ENCODE measurements at regions of chr11 and their contacts with region 1.

Region 1: DNA sequence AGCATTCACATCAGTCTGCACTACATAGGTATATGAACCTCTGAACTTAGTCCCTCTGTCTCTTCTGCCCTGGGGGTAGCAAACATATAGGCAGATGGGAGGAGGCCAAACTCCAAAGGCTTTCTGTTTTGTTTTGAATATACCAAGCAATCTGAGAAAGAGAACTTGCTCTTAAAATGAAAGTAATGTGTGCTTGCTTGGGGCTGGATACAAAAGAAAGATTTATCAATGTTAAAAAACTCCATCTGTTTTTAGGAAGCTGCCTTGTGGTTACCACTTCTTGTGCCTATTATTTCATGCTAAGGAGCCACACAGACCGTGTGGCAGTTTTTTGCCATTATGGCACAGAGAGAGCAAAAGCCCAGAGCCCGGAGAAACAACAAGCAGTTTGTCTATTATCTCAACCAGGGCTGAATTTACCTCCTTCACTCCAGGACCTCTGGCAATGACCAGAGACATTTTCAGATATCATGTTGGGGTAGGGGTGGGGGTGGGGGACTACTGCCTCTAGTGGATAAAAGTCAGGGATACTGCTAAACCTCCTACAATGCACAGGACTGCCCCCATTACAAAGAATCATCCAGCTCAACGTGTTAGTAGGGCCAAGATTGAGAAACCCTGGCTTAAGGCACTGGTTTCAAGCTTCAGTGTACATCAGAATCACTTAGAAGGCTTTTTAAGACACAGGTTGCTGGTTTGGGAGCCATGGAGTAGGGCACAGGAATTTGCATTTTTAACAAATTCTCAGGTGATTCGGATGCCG is 124.2 kb downstream of the APIP start:
- DNase-seq: no peak
- ATAC-seq: peak; percentile 72
- H3K4me3 Mint-ChIP-seq: no peak overlapping the region
- H3K27ac Mint-ChIP-seq: no peak overlapping the region
- H3K4me1 Mint-ChIP-seq: peaks cover 34% of the 10 kb centered on the region
- H3K27me3 Mint-ChIP-seq: no peaks in the 10 kb centered on the region; the same call in 1 of the 2 replicates
- CTCF ChIP-seq: no peak

Region 2: DNA sequence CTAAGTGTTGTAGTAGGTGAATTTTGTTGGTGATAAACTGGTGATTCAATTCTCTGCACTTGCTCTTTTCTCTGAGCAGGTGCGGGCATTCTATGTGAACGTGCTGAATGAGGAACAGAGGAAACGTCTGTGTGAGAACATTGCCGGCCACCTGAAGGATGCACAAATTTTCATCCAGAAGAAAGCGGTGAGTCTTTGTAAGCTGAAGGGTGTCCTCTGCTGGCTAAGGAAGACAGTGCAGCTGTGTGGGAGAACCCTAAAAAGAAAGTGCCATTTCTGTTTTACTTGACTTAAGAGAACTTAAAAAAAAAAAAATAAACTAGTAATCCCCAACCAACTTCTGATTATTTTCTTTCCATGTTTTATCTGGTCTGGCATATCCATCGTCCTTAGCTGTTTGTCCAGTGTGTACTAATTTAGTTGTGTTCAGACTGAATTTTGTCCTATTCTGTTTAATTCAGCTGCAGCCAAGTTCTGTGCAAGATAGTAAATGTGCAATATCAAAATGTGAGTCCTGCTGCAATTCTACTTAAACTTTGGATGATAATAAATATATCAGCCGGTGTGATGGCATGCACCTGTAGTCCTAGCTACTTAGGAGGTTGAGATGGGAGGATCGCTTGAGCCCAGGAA is 323.6 kb before region 1 on chr11:
- CTCF ChIA-PET with region 1: no interaction called
- POLR2A ChIA-PET with region 1: no interaction called
- DNase-seq: peak; percentile 38
- ATAC-seq: peak; percentile 71
- H3K4me3 Mint-ChIP-seq: no peak overlapping the region
- H3K27ac Mint-ChIP-seq: no peak overlapping the region
- H3K4me1 Mint-ChIP-seq: no peaks in the 10 kb centered on the region
- H3K27me3 Mint-ChIP-seq: no peaks in the 10 kb centered on the region
- CTCF ChIP-seq: peak; percentile 47; the same call in 1 of the 2 replicates

Region 3: DNA sequence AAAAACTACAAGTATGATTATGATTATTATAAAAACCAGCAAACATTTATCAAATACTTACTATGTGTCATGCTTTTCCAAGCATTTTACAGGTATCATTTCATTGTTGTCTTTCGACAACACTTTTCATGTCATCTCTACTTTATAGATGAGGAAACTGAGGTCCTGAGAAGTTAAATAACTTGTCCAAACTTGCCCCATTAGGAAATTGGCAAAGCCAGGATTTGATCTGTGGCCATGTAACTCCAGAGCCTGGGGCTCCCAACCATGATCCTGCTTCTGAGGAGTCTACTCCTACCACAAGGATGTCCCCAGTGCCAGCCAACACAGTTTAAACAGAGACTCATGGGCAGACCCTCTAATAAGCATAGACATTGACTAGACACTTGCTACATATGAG is 155.8 kb before region 1 on chr11:
- CTCF ChIA-PET with region 1: no interaction called
- POLR2A ChIA-PET with region 1: interaction called, 11 read pairs
- DNase-seq: no peak
- ATAC-seq: no peak
- H3K4me3 Mint-ChIP-seq: no peak overlapping the region
- H3K27ac Mint-ChIP-seq: 0 out of 2 replicates have a peak overlapping the region, but pooled peaks have one; percentile 49
- H3K4me1 Mint-ChIP-seq: peaks cover 20% of the 10 kb centered on the region
- H3K27me3 Mint-ChIP-seq: no peaks in the 10 kb centered on the region
- CTCF ChIP-seq: no peak

Region 4: GRCh38 chr11:34732831-34733230 is 59.1 kb before region 1 on chr11:
- CTCF ChIA-PET with region 1: no interaction called
- POLR2A ChIA-PET with region 1: no interaction called
- DNase-seq: no peak
- ATAC-seq: no peak
- H3K4me3 Mint-ChIP-seq: no peak overlapping the region
- H3K27ac Mint-ChIP-seq: no peak overlapping the region
- H3K4me1 Mint-ChIP-seq: no peaks in the 10 kb centered on the region
- H3K27me3 Mint-ChIP-seq: peaks cover 2% of the 10 kb centered on the region; the same call in 1 of the 2 replicates
- CTCF ChIP-seq: no peak

Region 5: GRCh38 chr11:34977089-34977906 is 185.3 kb after region 1 on chr11:
- CTCF ChIA-PET with region 1: no interaction called
- POLR2A ChIA-PET with region 1: no interaction called
- DNase-seq: no peak
- ATAC-seq: no peak
- H3K4me3 Mint-ChIP-seq: no peak overlapping the region
- H3K27ac Mint-ChIP-seq: no peak overlapping the region
- H3K4me1 Mint-ChIP-seq: peaks cover 14% of the 10 kb centered on the region
- H3K27me3 Mint-ChIP-seq: no peaks in the 10 kb centered on the region
- CTCF ChIP-seq: no peak

Measured in WTC11 (cell line).